ENCODE measurements at regions of chr11 and their contacts with region 1.

Region 1: GRCh38 chr11:119673759-119674336 is 55.2 kb downstream of the NECTIN1 start:
- DNase-seq: no peak
- H3K4me3 ChIP-seq: no peak overlapping the region
- H3K27ac ChIP-seq: peak overlapping the region in 1 of 2 experiments; percentile 93; a peak in 1 of 4 replicates
- H3K4me1 ChIP-seq: peaks cover 10 to 35% of the 10 kb centered on the region in 2 experiments; a peak in 2 of 4 replicates
- H3K27me3 ChIP-seq: no peaks in the 10 kb centered on the region
- CTCF ChIP-seq: no peak
- EP300 ChIP-seq: no peak
- RAD21 ChIP-seq: 0 out of 2 replicates have a peak, but pooled peaks have one; percentile 15

Region 2: GRCh38 chr11:119599864-119600541 is 73.8 kb before region 1 on chr11:
- CTCF ChIA-PET with region 1: no interaction called
- POLR2A ChIA-PET with region 1: no interaction called
- DNase-seq: no peak
- H3K4me3 ChIP-seq: no peak overlapping the region
- H3K27ac ChIP-seq: no peak overlapping the region
- H3K4me1 ChIP-seq: peaks cover 0 to 7% of the 10 kb centered on the region in 2 experiments; a peak in 3 of 4 replicates
- H3K27me3 ChIP-seq: no peaks in the 10 kb centered on the region
- CTCF ChIP-seq: no peak
- EP300 ChIP-seq: no peak
- RAD21 ChIP-seq: no peak

Region 3: DNA sequence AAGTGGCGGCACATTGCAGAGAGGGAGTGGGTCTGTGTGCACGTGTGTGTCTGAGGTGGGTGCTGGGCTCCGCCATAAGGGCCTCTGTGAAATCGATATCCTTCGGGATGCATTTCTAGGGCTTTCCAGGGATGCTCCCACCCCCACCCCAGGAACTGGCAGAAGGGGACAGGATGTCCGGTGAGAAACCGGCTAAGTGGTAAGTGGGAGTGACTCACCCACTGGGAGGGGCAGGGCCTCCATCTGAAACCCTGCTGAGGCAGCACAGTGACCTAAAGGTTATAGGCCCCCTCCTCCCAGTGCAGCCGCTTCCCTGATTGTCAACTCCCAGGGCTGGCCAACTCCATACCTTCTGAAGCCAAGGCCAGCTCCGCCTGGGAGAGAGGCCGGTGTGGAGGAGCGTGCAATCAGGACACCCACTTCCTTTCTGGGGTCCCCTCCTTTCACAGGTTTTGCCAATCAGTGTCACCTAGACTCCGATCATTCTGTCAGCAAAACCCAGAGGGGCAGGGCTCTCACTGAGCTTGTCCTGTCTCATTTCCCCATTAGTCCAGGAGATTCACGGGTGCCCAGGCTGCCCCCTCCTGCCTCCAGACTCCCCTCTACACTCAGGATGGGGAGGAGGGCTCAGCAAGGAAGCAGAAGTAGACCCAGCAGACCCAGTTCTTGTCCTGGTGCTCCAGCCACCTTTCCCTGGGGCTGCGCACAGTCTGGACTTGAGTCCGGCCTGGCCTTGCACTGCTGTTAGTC is 10.7 kb after region 1 on chr11:
- CTCF ChIA-PET with region 1: interaction called, 13 read pairs
- POLR2A ChIA-PET with region 1: no interaction called
- DNase-seq: peak; percentile 69
- H3K4me3 ChIP-seq: no peak overlapping the region
- H3K27ac ChIP-seq: peak overlapping the region; percentile 45 to 97
- H3K4me1 ChIP-seq: peaks cover 15 to 98% of the 10 kb centered on the region in 2 experiments
- H3K27me3 ChIP-seq: no peaks in the 10 kb centered on the region
- CTCF ChIP-seq: no peak
- EP300 ChIP-seq: no peak
- RAD21 ChIP-seq: no peak; the same call in 1 of the 2 replicates

Region 4: GRCh38 chr11:119701591-119702549 is 28.0 kb after region 1 on chr11:
- CTCF ChIA-PET with region 1: interaction called, 12 read pairs
- POLR2A ChIA-PET with region 1: interaction called, 5 read pairs
- DNase-seq: peak; percentile 88
- H3K4me3 ChIP-seq: no peak overlapping the region
- H3K27ac ChIP-seq: peak overlapping the region; percentile 30 to 96
- H3K4me1 ChIP-seq: peaks cover 4 to 89% of the 10 kb centered on the region in 2 experiments; a peak in 2 of 4 replicates
- H3K27me3 ChIP-seq: no peaks in the 10 kb centered on the region
- CTCF ChIP-seq: no peak
- EP300 ChIP-seq: peak in 1 of 2 experiments; percentile 71; a peak in 2 of 4 replicates
- RAD21 ChIP-seq: peak; percentile 37

Measured in SK-N-SH (cell line).